Activated CD4-positive, alpha-beta T cell treated with anti-CD3 and anti-CD28 coated beads for 36 hours (primary cell): ENCODE measurements at regions of chr12 and their contacts with region 1.

Region 1: DNA sequence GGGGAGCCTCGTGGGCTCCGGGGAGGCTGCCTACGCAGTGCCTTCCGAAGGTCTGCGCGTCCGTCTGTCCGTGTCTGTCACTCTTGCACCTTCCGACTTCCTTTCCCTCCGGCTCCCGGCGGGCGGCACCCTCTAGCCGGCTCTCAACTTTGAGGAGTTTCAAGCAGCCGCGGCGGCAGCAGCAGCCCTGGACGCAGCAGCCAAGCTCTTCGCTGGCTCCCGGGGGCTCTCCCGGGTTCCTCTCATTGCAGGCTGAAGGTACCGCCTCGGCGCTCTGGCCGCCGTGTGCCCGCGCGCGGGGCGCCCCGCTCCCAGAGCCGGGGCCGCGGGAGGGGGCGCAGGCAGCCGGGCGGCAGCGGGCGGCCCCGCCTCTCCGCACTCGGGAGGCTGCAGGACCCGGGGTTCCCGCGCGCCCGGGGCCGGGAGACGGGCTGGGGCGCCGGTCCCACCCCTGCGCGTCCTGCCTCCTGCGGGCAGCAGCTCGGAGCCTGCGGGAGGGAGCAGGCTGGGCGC is at the starts of genes AMIGO2 and PCED1B:
- DNase-seq: peak; percentile 85
- ATAC-seq: peak; percentile 59
- H3K4me3 Mint-ChIP-seq: peak within 1 kb of the TSS; percentile 96
- H3K27ac Mint-ChIP-seq: peak within 1 kb of the TSS; percentile 96
- H3K4me1 Mint-ChIP-seq: peaks cover 73% of the 10 kb centered on the region
- H3K27me3 Mint-ChIP-seq: no peaks in the 10 kb centered on the region
- total RNA-seq, gene AMIGO2: 15.1 to 17.1 TPM
- total RNA-seq, gene PCED1B: 76.3 to 82.3 TPM

Region 2: GRCh38 chr12:47190271-47190750 is 110.8 kb after region 1 on chr12:
- CTCF ChIA-PET with region 1: interaction called, 5 read pairs
- POLR2A ChIA-PET with region 1: no interaction called
- intact Hi-C with region 1: loop called in 1 of 2 experiments (anchors 1 kb)
- DNase-seq: peak; percentile 57
- ATAC-seq: peak; percentile 84
- H3K4me3 Mint-ChIP-seq: peak overlapping the region; percentile 26
- H3K27ac Mint-ChIP-seq: peak overlapping the region; percentile 79
- H3K4me1 Mint-ChIP-seq: peaks cover 82% of the 10 kb centered on the region
- H3K27me3 Mint-ChIP-seq: no peaks in the 10 kb centered on the region

Region 3: DNA sequence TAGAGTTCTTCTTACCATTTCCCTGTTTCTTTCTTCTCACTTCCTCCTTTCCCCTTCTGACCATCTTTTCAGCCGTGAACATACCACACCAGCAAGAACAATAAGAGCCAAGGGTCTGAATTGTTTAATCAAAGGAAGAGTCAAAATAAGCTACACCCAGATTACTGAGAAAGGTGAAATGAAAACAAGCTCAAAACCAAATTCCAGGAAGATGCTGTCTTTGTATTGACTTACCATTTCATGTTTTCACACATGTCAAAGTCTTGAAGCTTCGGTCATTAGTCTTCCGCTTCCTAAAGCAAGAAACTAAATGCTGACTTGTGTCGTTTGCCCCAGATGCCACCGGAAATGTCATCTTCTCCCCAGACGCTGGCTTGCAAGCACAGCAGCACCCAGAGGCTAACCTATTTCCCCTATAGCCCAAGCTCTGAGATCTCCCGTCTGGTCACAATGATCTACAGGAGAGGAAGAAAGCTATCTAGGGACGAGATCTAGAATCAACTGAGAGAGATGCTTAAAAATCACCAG is 136.7 kb after region 1 on chr12:
- CTCF ChIA-PET with region 1: interaction called, 12 read pairs
- POLR2A ChIA-PET with region 1: interaction called, 6 read pairs
- intact Hi-C with region 1: loop called (anchors 1 to 2 kb)
- DNase-seq: peak; percentile 81
- ATAC-seq: peak; percentile 43
- H3K4me3 Mint-ChIP-seq: peak overlapping the region; percentile 89
- H3K27ac Mint-ChIP-seq: peak overlapping the region; percentile 96
- H3K4me1 Mint-ChIP-seq: peaks cover 38% of the 10 kb centered on the region
- H3K27me3 Mint-ChIP-seq: no peaks in the 10 kb centered on the region

Region 4: DNA sequence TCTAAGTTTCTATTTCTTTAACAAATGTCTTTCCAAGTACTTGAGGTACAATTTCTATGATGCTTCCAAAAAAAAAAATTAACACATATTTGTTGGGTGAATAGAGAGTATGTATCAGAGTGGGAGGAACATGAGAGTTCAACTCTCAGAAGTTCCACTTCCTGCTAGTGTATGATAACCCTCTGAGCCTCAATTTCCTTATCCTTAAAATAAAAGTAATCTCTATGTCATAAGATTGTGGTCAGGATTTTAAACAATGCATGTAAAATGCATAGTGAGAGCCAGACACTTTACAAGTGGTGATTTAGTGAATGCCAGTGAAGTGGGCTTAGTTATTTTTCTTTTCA is 270.5 kb after region 1 on chr12:
- CTCF ChIA-PET with region 1: no interaction called
- POLR2A ChIA-PET with region 1: no interaction called
- intact Hi-C with region 1: loop called in 1 of 2 experiments (anchors 5 kb)
- DNase-seq: no peak
- ATAC-seq: peak; percentile 88
- H3K4me3 Mint-ChIP-seq: peak overlapping the region; percentile 53
- H3K27ac Mint-ChIP-seq: peak overlapping the region; percentile 98
- H3K4me1 Mint-ChIP-seq: peaks cover 79% of the 10 kb centered on the region
- H3K27me3 Mint-ChIP-seq: no peaks in the 10 kb centered on the region

Region 5: DNA sequence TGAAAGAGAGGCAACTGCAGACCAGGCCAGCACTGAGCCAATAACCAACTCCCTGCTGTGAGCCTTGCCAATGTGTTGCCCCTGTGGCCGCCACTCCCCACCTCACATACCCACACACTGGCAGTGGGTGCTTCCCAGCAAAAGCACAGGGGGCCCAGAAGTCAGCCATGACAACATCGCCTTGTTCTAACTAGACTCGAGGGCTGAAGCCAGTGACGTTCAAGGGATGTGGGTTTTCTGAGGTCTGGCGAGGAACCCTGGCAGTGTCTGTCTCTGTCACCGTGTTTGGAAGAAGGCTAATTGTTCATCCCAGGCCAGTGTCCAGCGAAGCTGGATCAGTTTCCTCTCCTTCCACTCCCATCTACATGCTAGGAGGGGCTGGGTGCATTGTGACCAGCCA is 312.0 kb after region 1 on chr12:
- CTCF ChIA-PET with region 1: interaction called, 11 read pairs
- POLR2A ChIA-PET with region 1: no interaction called
- intact Hi-C with region 1: loop called (anchors 2 to 5 kb)
- DNase-seq: peak; percentile 84
- ATAC-seq: peak; percentile 48
- H3K4me3 Mint-ChIP-seq: peak overlapping the region; percentile 61
- H3K27ac Mint-ChIP-seq: peak overlapping the region; percentile 100
- H3K4me1 Mint-ChIP-seq: peaks cover 89% of the 10 kb centered on the region
- H3K27me3 Mint-ChIP-seq: no peaks in the 10 kb centered on the region